Caco-2 (cell line): ENCODE measurements at regions of chrX and their contacts with region 1.

Region 1: DNA sequence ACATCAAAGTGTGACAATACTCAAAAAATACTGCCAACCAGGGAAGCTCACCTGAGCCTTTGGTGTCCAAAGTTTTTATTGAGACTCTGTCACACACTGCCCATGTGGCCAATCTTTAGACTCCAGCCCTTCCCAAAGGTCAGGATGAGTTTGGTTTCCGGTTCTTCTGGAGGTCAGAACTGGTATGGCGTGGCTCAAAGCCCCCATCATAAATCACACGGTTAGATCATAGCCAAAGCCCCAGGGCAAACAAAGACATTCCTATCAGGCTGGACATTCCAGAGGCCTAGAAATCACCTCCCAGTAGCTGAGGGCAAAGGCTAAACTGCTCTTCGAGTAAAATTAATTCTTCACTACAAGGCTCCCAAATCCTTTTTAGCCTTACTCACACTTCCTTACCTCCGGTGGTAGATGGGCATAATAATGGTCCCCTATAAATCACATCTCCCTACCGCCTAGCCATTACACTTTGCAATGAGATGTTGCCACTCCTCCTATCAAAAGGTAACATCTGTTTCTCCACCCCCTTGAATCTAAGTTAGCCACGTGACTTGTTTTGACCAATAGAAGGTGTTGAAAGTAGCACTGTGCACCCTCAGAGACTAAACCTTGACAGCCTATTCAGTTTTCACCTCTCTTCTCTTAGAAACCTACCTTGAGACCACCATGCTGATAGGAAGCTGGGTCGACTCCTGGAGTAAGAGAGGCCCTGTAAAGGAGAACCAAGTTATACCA is 137.8 kb upstream of the DUSP21 start:
- DNase-seq: peak; percentile 85 to 90
- H3K4me3 ChIP-seq: no peak overlapping the region
- H3K4me3 Mint-ChIP-seq: peak overlapping the region; percentile 63
- H3K27ac Mint-ChIP-seq: peak overlapping the region; percentile 90
- H3K4me1 ChIP-seq: peaks cover 16% of the 10 kb centered on the region
- H3K4me1 Mint-ChIP-seq: no peaks in the 10 kb centered on the region
- H3K27me3 ChIP-seq: no peaks in the 10 kb centered on the region
- H3K27me3 Mint-ChIP-seq: no peaks in the 10 kb centered on the region
- CTCF ChIP-seq: no peak

Region 2: GRCh38 chrX:44651358-44651757 is 54.6 kb before region 1 on chrX:
- CTCF ChIA-PET with region 1: no interaction called
- POLR2A ChIA-PET with region 1: no interaction called
- intact Hi-C with region 1: no loop called
- DNase-seq: no peak
- H3K4me3 ChIP-seq: no peak overlapping the region
- H3K4me3 Mint-ChIP-seq: no peak overlapping the region
- H3K27ac Mint-ChIP-seq: no peak overlapping the region
- H3K4me1 ChIP-seq: no peaks in the 10 kb centered on the region
- H3K4me1 Mint-ChIP-seq: no peaks in the 10 kb centered on the region
- H3K27me3 ChIP-seq: no peaks in the 10 kb centered on the region
- H3K27me3 Mint-ChIP-seq: no peaks in the 10 kb centered on the region
- CTCF ChIP-seq: no peak

Region 3: GRCh38 chrX:44693255-44693654 is 12.7 kb before region 1 on chrX:
- CTCF ChIA-PET with region 1: no interaction called
- POLR2A ChIA-PET with region 1: no interaction called
- intact Hi-C with region 1: loop called (anchors 1 kb)
- DNase-seq: no peak
- H3K4me3 ChIP-seq: no peak overlapping the region
- H3K4me3 Mint-ChIP-seq: no peak overlapping the region
- H3K27ac Mint-ChIP-seq: no peak overlapping the region
- H3K4me1 ChIP-seq: peaks cover 21% of the 10 kb centered on the region
- H3K4me1 Mint-ChIP-seq: peaks cover 7% of the 10 kb centered on the region
- H3K27me3 ChIP-seq: no peaks in the 10 kb centered on the region
- H3K27me3 Mint-ChIP-seq: no peaks in the 10 kb centered on the region
- CTCF ChIP-seq: no peak